Psoas muscle (tissue), 8 donors: ENCODE measurements at regions of chr3 and their contacts with region 1.

Region 1: GRCh38 chr3:69161587-69162307 is 39.4 kb upstream of the LMOD3 start:
- DNase-seq: no peak
- ATAC-seq: peak; percentile 75 to 92 (median 82)
- H3K4me3 ChIP-seq: no peak overlapping the region
- H3K27ac ChIP-seq: no peak overlapping the region
- H3K4me1 ChIP-seq: no peaks in the 10 kb centered on the region
- H3K27me3 ChIP-seq: no peaks in the 10 kb centered on the region
- CTCF ChIP-seq: peak; percentile 95

Region 2: DNA sequence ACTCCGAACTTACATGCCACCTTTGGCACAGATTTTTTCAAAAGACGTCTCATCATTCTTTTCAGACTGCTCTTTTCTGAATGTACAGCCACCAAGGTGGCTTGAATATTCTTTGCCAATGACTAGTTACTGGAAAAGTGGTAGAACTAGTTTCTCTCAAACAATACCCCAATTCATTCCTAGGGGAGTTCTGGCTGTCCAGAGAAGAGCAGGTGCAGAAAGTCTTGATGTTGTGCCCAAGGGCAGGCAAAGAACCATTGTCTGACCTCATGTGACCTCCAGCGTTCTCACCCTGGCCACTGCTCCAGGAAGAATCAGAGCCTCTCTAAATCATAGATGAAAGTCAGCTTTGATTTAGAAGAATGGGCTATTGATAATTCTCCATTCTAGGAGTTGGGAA is 44.9 kb before region 1 on chr3:
- intact Hi-C with region 1: no loop called
- DNase-seq: no peak
- ATAC-seq: peak in 3 of 4 donors; percentile 35 to 44 (median 41)
- H3K4me3 ChIP-seq: peak overlapping the region; percentile 65
- H3K27ac ChIP-seq: peak overlapping the region; percentile 98
- H3K4me1 ChIP-seq: peaks cover 42% of the 10 kb centered on the region
- H3K27me3 ChIP-seq: no peaks in the 10 kb centered on the region
- CTCF ChIP-seq: no peak

Region 3: GRCh38 chr3:69410250-69410649 is 248.5 kb after region 1 on chr3:
- intact Hi-C with region 1: loop called (anchors 5 kb)
- DNase-seq: peak; percentile 56 to 66
- ATAC-seq: peak; percentile 77 to 92 (median 88)
- H3K4me3 ChIP-seq: peak overlapping the region; percentile 24
- H3K27ac ChIP-seq: no peak overlapping the region
- H3K4me1 ChIP-seq: no peaks in the 10 kb centered on the region
- H3K27me3 ChIP-seq: peaks cover 0 to 2% (median 0%) of the 10 kb centered on the region in 3 donors
- CTCF ChIP-seq: peak; percentile 82

Region 4: DNA sequence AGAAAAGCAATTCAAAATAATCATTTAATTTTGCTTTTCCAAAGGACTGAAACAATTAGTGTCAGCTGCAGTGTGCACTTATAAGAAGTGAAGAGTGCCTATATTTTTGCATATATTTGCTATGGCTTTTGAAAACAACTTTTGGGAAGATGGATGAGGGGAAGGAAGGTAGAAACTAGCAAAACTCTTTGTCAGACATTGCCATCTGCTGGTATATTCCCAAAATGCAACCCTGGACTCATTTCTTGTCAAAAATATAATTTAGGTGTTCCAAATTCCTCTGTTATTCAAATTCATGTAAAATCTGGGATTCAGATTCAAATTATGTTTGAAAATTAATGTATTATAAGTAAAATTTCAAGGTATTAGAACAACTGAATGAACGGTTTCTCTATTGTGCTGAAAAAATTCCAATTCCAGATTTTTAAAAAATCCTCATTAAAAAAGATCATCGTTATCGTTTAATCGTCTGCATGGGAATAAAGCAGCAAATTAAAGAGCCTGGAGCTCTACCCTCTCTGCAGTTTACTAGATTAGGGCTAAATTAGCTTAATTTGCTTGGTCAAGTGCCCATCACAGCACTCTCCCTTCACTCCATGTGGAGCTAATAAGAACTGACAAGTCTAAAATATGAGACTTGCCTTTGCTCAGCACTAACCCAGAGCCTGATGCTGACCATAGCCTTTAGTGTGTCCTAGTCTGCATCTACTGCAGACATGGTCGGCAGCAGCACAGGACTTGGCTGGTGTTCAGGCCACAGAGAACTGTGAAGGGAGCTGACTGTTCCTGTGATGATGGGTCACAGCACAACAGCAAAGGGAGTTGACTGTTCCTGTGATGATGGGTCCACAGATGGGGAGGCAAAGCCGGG is 509.6 kb after region 1 on chr3:
- intact Hi-C with region 1: loop called (anchors 5 kb)
- DNase-seq: no peak
- ATAC-seq: peak in 1 of 4 donors; percentile 59
- H3K4me3 ChIP-seq: no peak overlapping the region
- H3K27ac ChIP-seq: no peak overlapping the region
- H3K4me1 ChIP-seq: no peaks in the 10 kb centered on the region
- H3K27me3 ChIP-seq: no peaks in the 10 kb centered on the region
- CTCF ChIP-seq: peak; percentile 74